Stomach (tissue), 19 donors: ENCODE measurements at regions of chr3 and their contacts with region 1.

Region 1: GRCh38 chr3:51099794-51100535 is 285.1 kb upstream of the MANF start:
- DNase-seq: peak; percentile 72 to 78
- H3K4me3 ChIP-seq: no peak overlapping the region
- H3K27ac ChIP-seq: no peak overlapping the region
- H3K4me1 ChIP-seq: no peaks in the 10 kb centered on the region
- H3K27me3 ChIP-seq: no peaks in the 10 kb centered on the region
- CTCF ChIP-seq: peak in 5 of 7 experiments; percentile 44 to 67 (median 50)
- EP300 ChIP-seq: no peak
- POLR2A ChIP-seq: no peak

Region 2: GRCh38 chr3:51353691-51354090 is 253.7 kb after region 1 on chr3:
- intact Hi-C with region 1: loop called (anchors 10 kb)
- DNase-seq: no peak
- H3K4me3 ChIP-seq: no peak overlapping the region
- H3K27ac ChIP-seq: no peak overlapping the region
- H3K4me1 ChIP-seq: peaks cover 10 to 34% (median 26%) of the 10 kb centered on the region in 4 donors
- H3K27me3 ChIP-seq: no peaks in the 10 kb centered on the region
- CTCF ChIP-seq: no peak
- EP300 ChIP-seq: no peak
- POLR2A ChIP-seq: no peak